Caco-2 (cell line): ENCODE measurements at regions of chr11 and their contacts with region 1.

Region 1: GRCh38 chr11:121257992-121258391 is 34.6 kb upstream of the SC5D start:
- DNase-seq: peak in 1 of 2 experiments; percentile 65
- H3K4me3 ChIP-seq: no peak overlapping the region
- H3K4me3 Mint-ChIP-seq: peak overlapping the region; percentile 4
- H3K27ac Mint-ChIP-seq: peak overlapping the region; percentile 20
- H3K4me1 ChIP-seq: peaks cover 21% of the 10 kb centered on the region
- H3K4me1 Mint-ChIP-seq: peaks cover 18% of the 10 kb centered on the region
- H3K27me3 ChIP-seq: no peaks in the 10 kb centered on the region
- H3K27me3 Mint-ChIP-seq: no peaks in the 10 kb centered on the region
- CTCF ChIP-seq: no peak

Region 2: DNA sequence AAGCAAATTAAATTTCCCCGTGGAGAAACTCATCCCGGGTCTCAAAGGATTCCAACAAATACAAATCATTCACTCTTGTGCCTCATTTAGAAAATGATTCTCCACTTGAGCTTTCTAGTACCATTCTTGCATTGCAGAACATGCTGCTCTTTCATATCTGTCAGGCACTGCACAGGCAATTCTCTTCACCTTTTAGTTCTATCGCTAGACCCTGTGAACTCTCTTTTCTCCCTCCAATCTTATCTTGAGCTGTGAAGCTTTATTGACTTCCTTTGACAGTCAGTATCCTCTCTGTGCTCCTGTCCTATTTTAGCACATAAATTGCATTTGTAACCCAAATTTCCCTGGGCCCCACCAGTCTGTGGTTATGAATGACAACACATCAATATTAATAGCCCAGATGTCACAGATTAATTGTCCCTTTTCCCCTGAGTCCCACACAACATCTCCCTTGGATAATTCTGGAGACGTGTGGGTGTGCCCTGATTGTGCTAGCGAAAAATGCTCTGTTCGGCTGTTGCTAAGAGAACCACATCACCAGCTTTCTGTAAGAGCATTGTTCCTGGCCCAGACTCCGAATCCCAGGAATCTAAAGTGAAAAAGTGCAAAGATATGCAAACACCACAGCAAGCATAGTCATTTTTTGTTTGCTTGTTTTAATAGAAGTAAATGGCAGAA is 12.1 kb after region 1 on chr11:
- CTCF ChIA-PET with region 1: interaction called, 3 read pairs
- POLR2A ChIA-PET with region 1: no interaction called
- intact Hi-C with region 1: loop called (anchors 1 kb)
- DNase-seq: no peak
- H3K4me3 ChIP-seq: no peak overlapping the region
- H3K4me3 Mint-ChIP-seq: no peak overlapping the region
- H3K27ac Mint-ChIP-seq: no peak overlapping the region
- H3K4me1 ChIP-seq: peaks cover 22% of the 10 kb centered on the region
- H3K4me1 Mint-ChIP-seq: peaks cover 40% of the 10 kb centered on the region
- H3K27me3 ChIP-seq: no peaks in the 10 kb centered on the region
- H3K27me3 Mint-ChIP-seq: no peaks in the 10 kb centered on the region
- CTCF ChIP-seq: no peak

Region 3: DNA sequence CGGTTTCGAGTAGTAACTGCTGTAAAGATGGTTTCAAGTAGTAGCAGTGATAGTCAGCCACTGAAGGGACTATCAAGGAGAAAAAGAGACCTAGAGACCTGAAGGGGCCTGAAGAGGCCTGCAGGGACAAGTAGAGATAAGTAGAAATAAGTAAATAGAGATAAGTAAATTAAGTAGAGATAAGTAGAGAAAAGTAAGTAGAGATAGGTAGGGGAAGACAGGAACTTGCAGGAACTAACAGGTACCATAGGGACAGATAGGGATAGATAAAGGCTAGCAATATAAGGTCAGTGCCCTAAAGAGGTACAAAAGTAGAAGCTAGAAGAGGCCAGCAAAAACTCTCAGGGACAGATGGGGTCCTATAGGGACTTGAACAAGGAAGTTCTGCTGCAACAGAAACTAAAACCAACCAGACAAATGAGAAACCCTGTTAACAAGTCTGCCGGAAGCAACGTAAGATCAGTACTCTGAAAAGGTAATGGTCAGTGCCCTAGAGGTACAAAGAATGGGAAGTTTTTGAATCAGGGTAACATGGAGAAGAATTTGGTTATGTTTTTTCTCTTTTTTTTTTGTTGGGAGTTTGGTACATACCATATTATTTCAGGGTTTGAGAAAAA is 25.0 kb after region 1 on chr11:
- CTCF ChIA-PET with region 1: no interaction called
- POLR2A ChIA-PET with region 1: interaction called, 4 read pairs
- intact Hi-C with region 1: loop called (anchors 1 kb)
- DNase-seq: peak; percentile 51 to 69
- H3K4me3 ChIP-seq: no peak overlapping the region
- H3K4me3 Mint-ChIP-seq: peak overlapping the region; percentile 13
- H3K27ac Mint-ChIP-seq: peak overlapping the region; percentile 14
- H3K4me1 ChIP-seq: peaks cover 40% of the 10 kb centered on the region
- H3K4me1 Mint-ChIP-seq: peaks cover 40% of the 10 kb centered on the region
- H3K27me3 ChIP-seq: no peaks in the 10 kb centered on the region
- H3K27me3 Mint-ChIP-seq: peaks cover under 1% of the 10 kb centered on the region
- CTCF ChIP-seq: no peak

Region 4: GRCh38 chr11:121292495-121293287 is 34.7 kb after region 1 on chr11 and contains the start of gene SC5D:
- CTCF ChIA-PET with region 1: interaction called, 3 read pairs
- POLR2A ChIA-PET with region 1: no interaction called
- intact Hi-C with region 1: loop called (anchors 1 kb)
- DNase-seq: peak; percentile 98 to 99
- H3K4me3 ChIP-seq: peak within 1 kb of the TSS; percentile 97
- H3K4me3 Mint-ChIP-seq: peak within 1 kb of the TSS; percentile 89
- H3K27ac Mint-ChIP-seq: peak within 1 kb of the TSS; percentile 85
- H3K4me1 ChIP-seq: peaks cover 16% of the 10 kb centered on the region; the same call in 1 of the 2 replicates
- H3K4me1 Mint-ChIP-seq: peaks cover 27% of the 10 kb centered on the region
- H3K27me3 ChIP-seq: no peaks in the 10 kb centered on the region
- H3K27me3 Mint-ChIP-seq: no peaks in the 10 kb centered on the region
- CTCF ChIP-seq: peak in 1 of 2 experiments; percentile 2
- total RNA-seq, gene SC5D: 106 and 126 TPM in 2 replicates

Region 5: GRCh38 chr11:123062158-123062891 is 1804.3 kb after region 1 on chr11:
- CTCF ChIA-PET with region 1: no interaction called
- POLR2A ChIA-PET with region 1: interaction called, 13 read pairs
- intact Hi-C with region 1: no loop called
- DNase-seq: peak; percentile 100
- H3K4me3 ChIP-seq: peak overlapping the region; percentile 85
- H3K4me3 Mint-ChIP-seq: peak overlapping the region; percentile 84
- H3K27ac Mint-ChIP-seq: peak overlapping the region; percentile 98
- H3K4me1 ChIP-seq: peaks cover 26% of the 10 kb centered on the region
- H3K4me1 Mint-ChIP-seq: peaks cover 31% of the 10 kb centered on the region
- H3K27me3 ChIP-seq: no peaks in the 10 kb centered on the region
- H3K27me3 Mint-ChIP-seq: no peaks in the 10 kb centered on the region
- CTCF ChIP-seq: no peak